GM12878 (cell line): ENCODE measurements at regions of chr10 and their contacts with region 1.

Region 1: DNA sequence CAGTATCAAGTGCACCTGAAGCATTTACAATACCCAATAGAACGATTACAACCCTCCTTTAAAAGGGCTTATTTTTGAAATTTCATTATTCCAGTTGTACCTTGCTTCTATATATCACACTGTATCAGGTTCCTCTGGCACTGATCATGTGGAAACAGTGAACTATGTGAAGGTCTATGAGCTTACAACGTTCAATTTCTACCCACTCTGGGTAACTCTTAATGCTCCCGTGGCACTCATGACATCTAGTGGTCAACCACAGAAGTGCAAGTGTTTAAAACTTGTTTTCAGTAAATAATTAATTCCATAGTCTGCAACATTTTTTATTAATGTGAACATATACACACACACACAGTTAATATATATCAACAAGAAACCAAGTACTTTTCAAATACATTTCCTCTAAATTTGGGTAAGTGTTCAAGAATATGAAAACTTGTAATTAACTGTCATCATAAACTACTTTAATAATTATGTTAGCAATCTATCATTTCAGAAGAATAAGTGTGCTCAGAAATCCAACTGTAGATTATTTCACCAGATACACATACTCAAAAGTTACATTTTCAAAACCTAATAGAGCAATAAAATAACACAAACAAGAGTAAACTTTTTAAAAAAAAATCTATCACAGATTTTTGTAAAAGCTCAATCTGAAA is 61.0 kb downstream of the MPP7 start:
- DNase-seq: peak; percentile 2
- ATAC-seq: peak; percentile 70
- H3K4me3 ChIP-seq: no peak overlapping the region
- H3K27ac ChIP-seq: no peak overlapping the region
- H3K4me1 ChIP-seq: no peaks in the 10 kb centered on the region
- H3K27me3 ChIP-seq: peaks cover 0 to 3% of the 10 kb centered on the region in 2 experiments; a peak in 1 of 4 replicates
- CTCF ChIP-seq: peak; percentile 82 to 86 (median 83)
- EP300 ChIP-seq: no peak
- POLR2A ChIP-seq: no peak
- RAD21 ChIP-seq: peak; percentile 79

Region 2: GRCh38 chr10:27369880-27370279 is 872.0 kb before region 1 on chr10:
- CTCF ChIA-PET with region 1: interaction called, 12 read pairs
- POLR2A ChIA-PET with region 1: no interaction called
- RAD21 ChIA-PET with region 1: interaction called, 7 read pairs
- SMC1A ChIA-PET with region 1: no interaction called
- in situ Hi-C with region 1: no loop called
- intact Hi-C with region 1: no loop called
- DNase-seq: no peak
- ATAC-seq: peak; percentile 27; the same call in 2 of the 3 replicates
- H3K4me3 ChIP-seq: no peak overlapping the region
- H3K27ac ChIP-seq: no peak overlapping the region
- H3K4me1 ChIP-seq: 0 out of 2 replicates have a peak, but pooled peaks cover 6% of the 10 kb centered on the region
- H3K27me3 ChIP-seq: 0 out of 4 replicates have a peak, but pooled peaks cover 0 to 1% of the 10 kb centered on the region in 2 experiments
- CTCF ChIP-seq: no peak; a peak in 1 of 6 replicates
- EP300 ChIP-seq: no peak
- POLR2A ChIP-seq: no peak
- RAD21 ChIP-seq: peak; percentile 20; the same call in 1 of the 2 replicates

Region 3: GRCh38 chr10:27558612-27559020 is 683.3 kb before region 1 on chr10:
- CTCF ChIA-PET with region 1: interaction called, 5 read pairs
- POLR2A ChIA-PET with region 1: interaction called, 3 read pairs
- RAD21 ChIA-PET with region 1: interaction called, 3 read pairs
- SMC1A ChIA-PET with region 1: interaction called, 4 read pairs
- in situ Hi-C with region 1: no loop called
- intact Hi-C with region 1: loop called (anchors 2 kb)
- DNase-seq: no peak
- ATAC-seq: peak; percentile 87
- H3K4me3 ChIP-seq: no peak overlapping the region
- H3K27ac ChIP-seq: no peak overlapping the region
- H3K4me1 ChIP-seq: no peaks in the 10 kb centered on the region
- H3K27me3 ChIP-seq: no peaks in the 10 kb centered on the region
- CTCF ChIP-seq: peak; percentile 53 to 70 (median 57); a peak in 5 of 6 replicates
- EP300 ChIP-seq: no peak
- POLR2A ChIP-seq: no peak
- RAD21 ChIP-seq: peak; percentile 81

Region 4: GRCh38 chr10:27742195-27743011 is 499.5 kb before region 1 on chr10:
- CTCF ChIA-PET with region 1: interaction called, 4 read pairs
- POLR2A ChIA-PET with region 1: no interaction called
- RAD21 ChIA-PET with region 1: no interaction called
- SMC1A ChIA-PET with region 1: no interaction called
- in situ Hi-C with region 1: no loop called
- intact Hi-C with region 1: loop called (anchors 5 kb)
- DNase-seq: peak; percentile 38
- ATAC-seq: peak; percentile 99
- H3K4me3 ChIP-seq: no peak overlapping the region
- H3K27ac ChIP-seq: no peak overlapping the region
- H3K4me1 ChIP-seq: no peaks in the 10 kb centered on the region
- H3K27me3 ChIP-seq: peaks cover 12 to 50% of the 10 kb centered on the region in 2 experiments
- CTCF ChIP-seq: peak; percentile 58 to 69 (median 67); a peak in 5 of 6 replicates
- EP300 ChIP-seq: no peak; a peak in 1 of 4 replicates
- POLR2A ChIP-seq: no peak; the same call in 1 of the 2 replicates
- RAD21 ChIP-seq: peak; percentile 59

Region 5: DNA sequence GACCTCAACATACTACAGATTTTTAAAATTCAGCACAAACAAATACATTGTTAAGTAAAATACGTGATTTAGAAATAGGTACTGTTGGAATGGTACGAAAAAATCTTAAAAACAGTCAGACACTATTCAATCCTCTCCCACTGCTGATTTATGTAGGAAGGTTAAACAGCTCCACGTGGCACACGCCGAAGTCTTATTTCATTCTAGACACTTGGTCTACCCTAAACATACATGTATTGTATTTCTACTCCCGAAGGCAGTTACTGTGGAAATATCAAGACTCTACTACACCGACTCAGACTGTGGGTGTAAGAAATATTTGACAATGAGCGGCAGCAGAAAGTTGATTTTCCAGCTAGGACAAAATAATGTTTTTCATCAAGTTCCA is 69.7 kb before region 1 on chr10:
- CTCF ChIA-PET with region 1: no interaction called
- POLR2A ChIA-PET with region 1: no interaction called
- RAD21 ChIA-PET with region 1: no interaction called
- SMC1A ChIA-PET with region 1: no interaction called
- in situ Hi-C with region 1: no loop called
- intact Hi-C with region 1: no loop called
- DNase-seq: no peak
- ATAC-seq: no peak
- H3K4me3 ChIP-seq: no peak overlapping the region
- H3K27ac ChIP-seq: no peak overlapping the region
- H3K4me1 ChIP-seq: no peaks in the 10 kb centered on the region
- H3K27me3 ChIP-seq: no peaks in the 10 kb centered on the region
- CTCF ChIP-seq: no peak
- EP300 ChIP-seq: no peak
- POLR2A ChIP-seq: no peak
- RAD21 ChIP-seq: no peak

Region 6: GRCh38 chr10:28220811-28221210 is 21.1 kb before region 1 on chr10:
- CTCF ChIA-PET with region 1: interaction called, 16 read pairs
- POLR2A ChIA-PET with region 1: no interaction called
- RAD21 ChIA-PET with region 1: no interaction called
- SMC1A ChIA-PET with region 1: interaction called, 5 read pairs
- in situ Hi-C with region 1: no loop called
- intact Hi-C with region 1: no loop called
- DNase-seq: no peak
- ATAC-seq: no peak
- H3K4me3 ChIP-seq: no peak overlapping the region
- H3K27ac ChIP-seq: no peak overlapping the region
- H3K4me1 ChIP-seq: no peaks in the 10 kb centered on the region
- H3K27me3 ChIP-seq: no peaks in the 10 kb centered on the region
- CTCF ChIP-seq: no peak
- EP300 ChIP-seq: no peak
- POLR2A ChIP-seq: no peak
- RAD21 ChIP-seq: no peak